ENCODE measurements at regions of chr2 and their contacts with region 1.

Region 1: GRCh38 chr2:176079831-176080539 is 3.8 kb downstream of the EVX2 start:
- DNase-seq: peak; percentile 90
- ATAC-seq: peak; percentile 77
- H3K4me3 Mint-ChIP-seq: peak overlapping the region; percentile 81
- H3K27ac Mint-ChIP-seq: no peak overlapping the region
- H3K4me1 Mint-ChIP-seq: peaks cover 49% of the 10 kb centered on the region
- H3K27me3 Mint-ChIP-seq: peaks cover 98% of the 10 kb centered on the region
- CTCF ChIP-seq: peak; percentile 98

Region 2: GRCh38 chr2:175690113-175690837 is 389.7 kb before region 1 on chr2:
- CTCF ChIA-PET with region 1: interaction called, 28 read pairs
- POLR2A ChIA-PET with region 1: no interaction called
- DNase-seq: peak; percentile 21
- ATAC-seq: peak; percentile 60; the same call in 1 of the 2 replicates
- H3K4me3 Mint-ChIP-seq: no peak overlapping the region
- H3K27ac Mint-ChIP-seq: no peak overlapping the region
- H3K4me1 Mint-ChIP-seq: peaks cover 5% of the 10 kb centered on the region
- H3K27me3 Mint-ChIP-seq: no peaks in the 10 kb centered on the region
- CTCF ChIP-seq: peak; percentile 17; the same call in 1 of the 2 replicates

Region 3: GRCh38 chr2:175884697-175885393 is 195.1 kb before region 1 on chr2:
- CTCF ChIA-PET with region 1: interaction called, 10 read pairs
- POLR2A ChIA-PET with region 1: no interaction called
- DNase-seq: peak; percentile 15
- ATAC-seq: peak; percentile 61
- H3K4me3 Mint-ChIP-seq: no peak overlapping the region
- H3K27ac Mint-ChIP-seq: no peak overlapping the region; the same call in 1 of the 2 replicates
- H3K4me1 Mint-ChIP-seq: peaks cover 19% of the 10 kb centered on the region
- H3K27me3 Mint-ChIP-seq: no peaks in the 10 kb centered on the region
- CTCF ChIP-seq: no peak

Region 4: GRCh38 chr2:176062204-176062603 is 17.8 kb before region 1 on chr2:
- CTCF ChIA-PET with region 1: no interaction called
- POLR2A ChIA-PET with region 1: no interaction called
- DNase-seq: no peak
- ATAC-seq: no peak
- H3K4me3 Mint-ChIP-seq: no peak overlapping the region
- H3K27ac Mint-ChIP-seq: no peak overlapping the region
- H3K4me1 Mint-ChIP-seq: peaks cover 7% of the 10 kb centered on the region
- H3K27me3 Mint-ChIP-seq: peaks cover 66% of the 10 kb centered on the region
- CTCF ChIP-seq: no peak

Region 5: GRCh38 chr2:176117823-176118371 is 37.9 kb after region 1 on chr2:
- CTCF ChIA-PET with region 1: no interaction called
- POLR2A ChIA-PET with region 1: no interaction called
- DNase-seq: no peak
- ATAC-seq: no peak
- H3K4me3 Mint-ChIP-seq: no peak overlapping the region
- H3K27ac Mint-ChIP-seq: no peak overlapping the region
- H3K4me1 Mint-ChIP-seq: peaks cover 15% of the 10 kb centered on the region
- H3K27me3 Mint-ChIP-seq: peaks cover 100% of the 10 kb centered on the region
- CTCF ChIP-seq: no peak